ENCODE measurements at regions of chr11 and their contacts with region 1.

Region 1: DNA sequence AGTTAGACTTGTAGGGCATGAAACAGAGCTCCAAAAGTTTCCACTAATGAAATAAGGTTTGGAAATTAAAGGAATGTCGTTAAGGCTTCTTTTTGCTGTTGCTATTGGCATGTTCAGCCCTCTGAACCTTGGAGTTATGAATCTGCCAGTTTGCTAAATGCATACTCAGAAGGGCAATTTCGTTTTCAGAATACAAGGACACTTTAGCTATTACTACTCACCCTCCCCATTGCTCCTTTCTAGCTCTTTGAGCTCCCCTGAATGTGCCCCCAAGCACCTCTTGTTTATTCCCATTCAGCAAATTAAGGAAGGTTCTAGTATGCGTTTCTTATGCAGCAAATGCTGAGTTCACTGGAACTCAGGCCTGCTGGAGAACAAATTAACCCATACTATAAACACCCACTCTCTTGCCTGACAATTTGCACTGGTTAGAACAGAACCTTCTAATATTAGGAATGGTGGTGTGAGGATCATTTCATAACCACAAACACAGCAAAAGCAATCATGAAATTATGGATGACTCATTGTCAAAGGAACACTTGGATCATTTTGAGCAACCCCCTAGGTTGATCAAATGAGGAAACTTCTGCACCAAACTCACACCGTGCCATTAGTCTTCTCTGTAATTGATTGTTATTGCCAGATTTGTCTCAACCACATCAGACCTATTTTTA is 26.2 kb upstream of the LIN7C start:
- DNase-seq: no peak
- ATAC-seq: no peak
- H3K4me3 ChIP-seq: no peak overlapping the region
- H3K27ac ChIP-seq: no peak overlapping the region
- H3K4me1 ChIP-seq: peaks cover 0 to 12% (median 0%) of the 10 kb centered on the region in 12 donors
- H3K27me3 ChIP-seq: no peaks in the 10 kb centered on the region
- CTCF ChIP-seq: no peak
- POLR2A ChIP-seq: no peak

Region 2: GRCh38 chr11:27599217-27599616 is 66.4 kb after region 1 on chr11:
- intact Hi-C with region 1: no loop called
- DNase-seq: peak in 1 of 5 donors; percentile 20
- ATAC-seq: no peak
- H3K4me3 ChIP-seq: no peak overlapping the region
- H3K27ac ChIP-seq: no peak overlapping the region
- H3K4me1 ChIP-seq: no peaks in the 10 kb centered on the region
- H3K27me3 ChIP-seq: no peaks in the 10 kb centered on the region
- CTCF ChIP-seq: no peak
- POLR2A ChIP-seq: no peak

Region 3: DNA sequence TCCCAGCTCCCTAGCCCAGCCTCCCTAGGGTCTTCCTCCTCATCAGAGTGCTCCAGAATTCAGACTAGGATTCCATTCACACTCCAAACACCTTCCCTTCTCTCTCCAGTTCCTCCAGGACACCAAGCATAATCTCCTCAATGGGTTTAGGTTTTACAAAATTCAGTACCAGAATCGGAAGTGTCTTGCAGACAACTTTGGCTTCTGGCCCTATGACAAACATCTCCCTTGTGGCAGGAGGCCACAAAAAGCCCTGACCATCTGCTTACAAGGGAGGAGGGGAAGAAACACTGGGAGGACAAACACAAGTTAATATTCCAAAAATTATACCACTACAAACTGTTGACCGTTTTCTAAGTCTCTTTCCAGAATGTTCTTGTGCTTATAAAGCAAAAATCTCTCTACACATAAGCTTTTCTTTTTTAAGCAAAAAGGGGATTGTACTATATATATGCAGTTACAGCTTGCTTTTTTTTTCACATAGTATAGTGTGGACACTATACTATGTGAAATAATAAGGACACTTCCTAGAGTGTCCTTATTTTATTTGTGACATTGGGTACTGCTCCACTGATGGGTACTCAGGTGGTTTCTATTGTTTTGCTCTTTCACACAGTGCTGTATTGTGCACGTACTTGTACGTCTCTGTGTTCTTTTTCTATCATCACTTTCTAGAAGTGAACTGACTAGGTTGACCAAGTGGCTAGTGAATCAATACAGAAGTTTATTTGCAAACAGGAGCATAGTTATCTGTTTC is 88.8 kb after region 1 on chr11:
- intact Hi-C with region 1: loop called in 1 of 10 experiments (anchors 10 kb)
- DNase-seq: peak in 2 of 5 donors; percentile 18 to 26
- ATAC-seq: peak in 1 of 4 donors; percentile 42
- H3K4me3 ChIP-seq: no peak overlapping the region
- H3K27ac ChIP-seq: no peak overlapping the region
- H3K4me1 ChIP-seq: peaks cover 0 to 27% (median 14%) of the 10 kb centered on the region in 12 donors
- H3K27me3 ChIP-seq: no peaks in the 10 kb centered on the region
- CTCF ChIP-seq: no peak
- POLR2A ChIP-seq: no peak

Region 4: GRCh38 chr11:27642954-27643353 is 110.2 kb after region 1 on chr11:
- intact Hi-C with region 1: loop called in 1 of 10 experiments (anchors 10 kb)
- DNase-seq: no peak
- ATAC-seq: peak in 1 of 4 donors; percentile 34
- H3K4me3 ChIP-seq: no peak overlapping the region
- H3K27ac ChIP-seq: no peak overlapping the region
- H3K4me1 ChIP-seq: peaks cover 0 to 27% (median 0%) of the 10 kb centered on the region in 12 donors
- H3K27me3 ChIP-seq: no peaks in the 10 kb centered on the region
- CTCF ChIP-seq: peak in 5 of 12 donors; percentile 5 to 19 (median 11)
- POLR2A ChIP-seq: no peak

Measured in heart left ventricle (tissue), 16 donors.